Activated naive CD4-positive, alpha-beta T cell treated with anti-CD3 and anti-CD28 coated beads for 36 hours (primary cell): ENCODE measurements at regions of chr10 and their contacts with region 1.

Region 1: DNA sequence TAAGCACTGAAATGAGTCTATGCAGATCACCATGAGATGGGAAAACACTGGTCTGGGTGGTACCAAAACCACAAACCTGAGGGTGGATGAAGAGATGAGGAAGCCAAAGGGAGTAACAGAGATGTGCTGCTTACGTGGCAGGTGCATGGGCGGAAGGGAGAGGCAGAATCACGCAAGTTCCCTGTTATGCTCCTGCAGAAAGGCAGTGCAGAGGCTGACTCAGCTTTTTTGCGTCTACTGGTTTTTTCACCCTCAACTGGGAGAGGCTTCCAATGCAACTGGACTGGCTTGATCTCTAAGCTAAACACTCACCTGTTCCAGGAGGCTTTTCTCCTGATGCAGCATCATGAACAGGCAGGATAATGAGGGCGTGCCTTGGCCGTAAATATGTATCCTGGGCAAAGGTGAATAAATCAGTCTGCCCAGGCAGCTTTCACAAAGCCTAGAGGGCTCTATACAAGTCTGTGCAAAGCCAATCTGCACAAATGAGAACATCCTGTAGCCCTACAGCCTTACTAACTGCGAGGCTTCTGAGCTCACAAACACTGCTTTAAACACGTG is 95.4 kb upstream of the AFAP1L2 start:
- DNase-seq: peak; percentile 95
- H3K4me3 Mint-ChIP-seq: peak overlapping the region; percentile 56
- H3K27ac Mint-ChIP-seq: peak overlapping the region; percentile 96
- H3K4me1 Mint-ChIP-seq: peaks cover 87% of the 10 kb centered on the region
- H3K27me3 Mint-ChIP-seq: no peaks in the 10 kb centered on the region

Region 2: GRCh38 chr10:114173921-114174694 is 325.6 kb before region 1 on chr10 and contains the start of gene CCDC186:
- CTCF ChIA-PET with region 1: no interaction called
- intact Hi-C with region 1: loop called (anchors 5 kb)
- DNase-seq: peak; percentile 99
- H3K4me3 Mint-ChIP-seq: peak within 1 kb of the TSS; percentile 98
- H3K27ac Mint-ChIP-seq: peak within 1 kb of the TSS; percentile 93
- H3K4me1 Mint-ChIP-seq: peaks cover 27% of the 10 kb centered on the region
- H3K27me3 Mint-ChIP-seq: no peaks in the 10 kb centered on the region
- total RNA-seq, gene CCDC186: 10.3 to 13.7 TPM

Region 3: DNA sequence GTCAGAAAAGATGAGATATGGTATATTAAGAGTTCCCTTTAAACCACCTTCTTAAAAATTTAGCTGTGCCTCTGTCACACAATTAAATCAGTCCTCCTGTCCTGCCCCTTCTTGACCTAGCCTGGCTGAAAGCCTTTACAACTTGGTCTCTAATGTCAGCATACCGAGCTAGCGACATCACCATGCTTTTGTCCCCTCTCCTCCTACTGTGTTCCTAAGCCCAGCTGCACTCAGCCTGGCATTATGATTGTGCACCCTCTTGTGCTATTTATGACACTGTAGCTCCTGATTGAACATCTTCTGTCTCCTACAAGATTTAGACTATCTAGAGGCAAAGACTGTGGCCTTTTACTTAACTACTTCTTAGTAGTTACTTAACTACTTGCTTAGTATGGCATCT is 291.4 kb before region 1 on chr10:
- CTCF ChIA-PET with region 1: no interaction called
- intact Hi-C with region 1: no loop called
- DNase-seq: no peak
- H3K4me3 Mint-ChIP-seq: no peak overlapping the region
- H3K27ac Mint-ChIP-seq: no peak overlapping the region
- H3K4me1 Mint-ChIP-seq: no peaks in the 10 kb centered on the region
- H3K27me3 Mint-ChIP-seq: peaks cover 5% of the 10 kb centered on the region

Region 4: GRCh38 chr10:114437456-114438292 is 62.0 kb before region 1 on chr10:
- CTCF ChIA-PET with region 1: no interaction called
- intact Hi-C with region 1: no loop called
- DNase-seq: no peak
- H3K4me3 Mint-ChIP-seq: no peak overlapping the region
- H3K27ac Mint-ChIP-seq: no peak overlapping the region
- H3K4me1 Mint-ChIP-seq: no peaks in the 10 kb centered on the region
- H3K27me3 Mint-ChIP-seq: no peaks in the 10 kb centered on the region

Region 5: GRCh38 chr10:114515298-114515914 is 15.7 kb after region 1 on chr10:
- CTCF ChIA-PET with region 1: interaction called, 63 read pairs
- intact Hi-C with region 1: loop called (anchors 1 kb)
- DNase-seq: peak; percentile 42
- H3K4me3 Mint-ChIP-seq: peak overlapping the region; percentile 8
- H3K27ac Mint-ChIP-seq: peak overlapping the region; percentile 80
- H3K4me1 Mint-ChIP-seq: peaks cover 90% of the 10 kb centered on the region
- H3K27me3 Mint-ChIP-seq: no peaks in the 10 kb centered on the region

Region 6: DNA sequence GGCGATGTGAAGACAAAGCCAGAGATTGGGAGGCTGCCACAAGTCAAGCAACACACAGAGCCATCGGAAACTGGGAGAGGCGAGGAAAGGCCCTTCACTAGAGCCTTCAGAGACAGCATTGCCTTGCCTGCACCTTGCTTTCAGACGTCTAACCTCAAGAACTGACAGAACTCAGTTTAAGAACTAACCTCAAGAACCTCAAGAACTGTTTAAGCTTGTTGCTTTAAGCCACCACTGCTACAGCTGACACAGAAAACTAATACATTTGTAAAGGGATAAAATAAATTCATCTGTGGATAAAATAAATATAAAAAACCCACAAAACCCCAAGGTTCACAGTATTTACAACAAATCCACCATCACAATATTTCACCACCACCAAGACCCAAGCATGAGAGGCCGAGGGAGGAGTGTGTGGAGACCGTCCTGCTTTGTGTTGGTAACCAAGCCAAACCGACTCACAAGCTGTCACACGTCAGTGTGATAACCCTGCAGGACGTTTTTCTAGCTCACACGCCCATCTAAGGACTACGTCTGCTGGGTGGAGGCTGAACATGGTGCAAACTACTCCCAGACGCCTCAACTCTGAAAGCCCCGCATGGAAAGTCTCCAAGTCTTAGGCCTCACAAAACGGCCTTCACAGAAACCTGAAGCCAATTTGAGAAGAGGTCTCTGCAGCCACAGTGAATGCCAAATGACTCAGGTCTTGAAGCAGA is 41.5 kb after region 1 on chr10:
- CTCF ChIA-PET with region 1: interaction called, 6 read pairs
- intact Hi-C with region 1: loop called (anchors 1 kb)
- DNase-seq: peak; percentile 87
- H3K4me3 Mint-ChIP-seq: peak overlapping the region; percentile 69
- H3K27ac Mint-ChIP-seq: peak overlapping the region; percentile 95
- H3K4me1 Mint-ChIP-seq: peaks cover 90% of the 10 kb centered on the region
- H3K27me3 Mint-ChIP-seq: no peaks in the 10 kb centered on the region

Region 7: GRCh38 chr10:114937962-114938855 is 438.5 kb after region 1 on chr10 and contains the start of gene TRUB1:
- CTCF ChIA-PET with region 1: no interaction called
- intact Hi-C with region 1: loop called (anchors 5 kb)
- DNase-seq: peak; percentile 97
- H3K4me3 Mint-ChIP-seq: peak within 1 kb of the TSS; percentile 95
- H3K27ac Mint-ChIP-seq: peak within 1 kb of the TSS; percentile 82
- H3K4me1 Mint-ChIP-seq: peaks cover 29% of the 10 kb centered on the region
- H3K27me3 Mint-ChIP-seq: no peaks in the 10 kb centered on the region
- total RNA-seq, gene TRUB1: 15.2 to 15.3 TPM